HCT116 (cell line): ENCODE measurements at regions of chr5 and their contacts with region 1.

Region 1: GRCh38 chr5:122192497-122193496 is 63.5 kb downstream of the ZNF474 start:
- DNase-seq: peak; percentile 46
- ATAC-seq: peak; percentile 86
- H3K4me3 ChIP-seq: no peak overlapping the region
- H3K27ac ChIP-seq: no peak overlapping the region
- H3K4me1 ChIP-seq: no peaks in the 10 kb centered on the region
- H3K27me3 ChIP-seq: no peaks in the 10 kb centered on the region
- CTCF ChIP-seq: peak; percentile 41 to 66 (median 44); a peak in 4 of 6 replicates
- POLR2A ChIP-seq: no peak
- RAD21 ChIP-seq: peak; percentile 62

Region 2: GRCh38 chr5:122415030-122415800 is 222.4 kb after region 1 on chr5:
- CTCF ChIA-PET with region 1: interaction called, 7 read pairs
- POLR2A ChIA-PET with region 1: no interaction called
- RAD21 ChIA-PET with region 1: no interaction called
- intact Hi-C with region 1: loop called (anchors 1 kb)
- DNase-seq: peak; percentile 38
- ATAC-seq: peak; percentile 98
- H3K4me3 ChIP-seq: no peak overlapping the region
- H3K27ac ChIP-seq: no peak overlapping the region
- H3K4me1 ChIP-seq: no peaks in the 10 kb centered on the region
- H3K27me3 ChIP-seq: no peaks in the 10 kb centered on the region
- CTCF ChIP-seq: peak; percentile 38 to 69 (median 65); a peak in 5 of 6 replicates
- POLR2A ChIP-seq: no peak
- RAD21 ChIP-seq: peak; percentile 75

Region 3: GRCh38 chr5:122492664-122493063 is 299.9 kb after region 1 on chr5:
- CTCF ChIA-PET with region 1: interaction called, 19 read pairs
- POLR2A ChIA-PET with region 1: interaction called, 4 read pairs
- RAD21 ChIA-PET with region 1: interaction called in 1 of 2 experiments, 4 read pairs
- intact Hi-C with region 1: loop called (anchors 2 kb)
- DNase-seq: peak; percentile 24
- ATAC-seq: peak; percentile 88
- H3K4me3 ChIP-seq: no peak overlapping the region
- H3K27ac ChIP-seq: no peak overlapping the region
- H3K4me1 ChIP-seq: no peaks in the 10 kb centered on the region
- H3K27me3 ChIP-seq: no peaks in the 10 kb centered on the region
- CTCF ChIP-seq: peak; percentile 49 to 57 (median 49); a peak in 5 of 6 replicates
- POLR2A ChIP-seq: no peak
- RAD21 ChIP-seq: peak; percentile 64

Region 4: GRCh38 chr5:122942164-122942914 is 749.5 kb after region 1 on chr5:
- CTCF ChIA-PET with region 1: no interaction called
- POLR2A ChIA-PET with region 1: no interaction called
- RAD21 ChIA-PET with region 1: no interaction called
- intact Hi-C with region 1: no loop called
- DNase-seq: no peak
- ATAC-seq: no peak
- H3K4me3 ChIP-seq: no peak overlapping the region
- H3K27ac ChIP-seq: no peak overlapping the region
- H3K4me1 ChIP-seq: peaks cover 0 to 9% of the 10 kb centered on the region in 2 experiments; a peak in 1 of 4 replicates
- H3K27me3 ChIP-seq: no peaks in the 10 kb centered on the region
- CTCF ChIP-seq: no peak
- POLR2A ChIP-seq: no peak
- RAD21 ChIP-seq: no peak